Vagina (tissue), 2 donors: ENCODE measurements at regions of chr2 and their contacts with region 1.

Region 1: DNA sequence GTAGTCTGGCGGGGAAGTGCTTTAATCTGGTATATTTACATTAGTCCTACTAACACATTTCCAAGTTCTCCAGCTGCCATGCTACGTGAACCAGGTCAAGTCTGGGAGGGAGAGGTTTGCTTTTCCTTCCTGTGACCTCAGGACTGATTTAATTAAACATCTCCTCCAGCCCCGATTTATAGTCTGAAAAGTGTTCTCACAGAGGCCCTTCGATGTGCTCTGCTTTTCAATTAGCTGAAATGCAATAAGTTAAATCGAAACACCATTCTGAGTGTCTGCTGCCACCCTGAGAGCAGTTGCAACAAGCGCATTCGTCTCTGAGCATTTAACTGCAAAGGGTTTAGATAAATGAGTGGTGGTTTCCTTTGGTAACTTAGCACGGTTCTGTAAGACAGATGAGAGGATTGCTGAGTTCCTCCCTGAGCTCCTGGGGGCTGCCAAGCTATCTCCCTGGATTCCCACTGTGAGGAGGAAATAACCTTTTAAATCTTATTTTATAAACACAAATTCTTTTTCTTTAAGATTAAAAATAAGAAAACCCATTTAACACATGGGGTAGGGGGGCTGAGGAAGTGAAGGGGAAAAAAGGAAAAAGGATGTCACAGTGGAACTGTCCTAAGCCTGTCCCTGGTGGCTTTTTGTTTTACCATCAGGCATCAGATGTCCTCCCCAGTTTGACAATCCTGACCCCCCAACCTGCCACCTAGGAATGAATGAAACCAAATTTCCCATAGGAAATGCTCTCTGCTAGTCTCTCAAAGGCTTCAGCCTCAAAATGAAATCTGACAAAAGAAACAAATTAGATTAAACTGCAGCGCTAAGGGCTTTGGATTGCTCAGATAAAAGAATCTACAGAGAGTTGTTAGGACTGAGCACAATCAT is 56.5 kb upstream of the CREB1 start:
- DNase-seq: no peak
- H3K4me3 ChIP-seq: no peak overlapping the region
- H3K27ac ChIP-seq: no peak overlapping the region
- H3K4me1 ChIP-seq: peaks cover 8% of the 10 kb centered on the region
- H3K27me3 ChIP-seq: no peaks in the 10 kb centered on the region
- CTCF ChIP-seq: peak in 1 of 3 experiments; percentile 38
- POLR2A ChIP-seq: no peak

Region 2: GRCh38 chr2:206981739-206982340 is 491.4 kb before region 1 on chr2:
- intact Hi-C with region 1: loop called (anchors 5 kb)
- DNase-seq: no peak
- H3K4me3 ChIP-seq: no peak overlapping the region
- H3K27ac ChIP-seq: no peak overlapping the region
- H3K4me1 ChIP-seq: peaks cover 4% of the 10 kb centered on the region
- H3K27me3 ChIP-seq: no peaks in the 10 kb centered on the region
- CTCF ChIP-seq: peak; percentile 52 to 71 (median 62)
- POLR2A ChIP-seq: no peak

Region 3: GRCh38 chr2:207163053-207163755 is 310.1 kb before region 1 on chr2:
- intact Hi-C with region 1: no loop called
- DNase-seq: no peak
- H3K4me3 ChIP-seq: peak overlapping the region; percentile 83 to 88
- H3K27ac ChIP-seq: peak overlapping the region; percentile 100
- H3K4me1 ChIP-seq: peaks cover 56% of the 10 kb centered on the region
- H3K27me3 ChIP-seq: no peaks in the 10 kb centered on the region
- CTCF ChIP-seq: no peak
- POLR2A ChIP-seq: peak in 1 of 2 donors; percentile 33

Region 4: GRCh38 chr2:207601774-207602173 is 128.5 kb after region 1 on chr2:
- intact Hi-C with region 1: no loop called
- DNase-seq: no peak
- H3K4me3 ChIP-seq: no peak overlapping the region
- H3K27ac ChIP-seq: no peak overlapping the region
- H3K4me1 ChIP-seq: no peaks in the 10 kb centered on the region
- H3K27me3 ChIP-seq: no peaks in the 10 kb centered on the region
- CTCF ChIP-seq: no peak
- POLR2A ChIP-seq: no peak